Activated B cell treated with CpG ODN at 0.5 μM for 24 hours (primary cell): ENCODE measurements at regions of chr5 and their contacts with region 1.

Region 1: GRCh38 chr5:143403593-143404415 is at the start of gene NR3C1:
- DNase-seq: peak; percentile 87
- ATAC-seq: peak; percentile 72
- H3K4me3 Mint-ChIP-seq: peak within 1 kb of the TSS; percentile 95
- H3K27ac Mint-ChIP-seq: peak within 1 kb of the TSS; percentile 100
- H3K4me1 Mint-ChIP-seq: peaks cover 45% of the 10 kb centered on the region
- H3K27me3 Mint-ChIP-seq: no peaks in the 10 kb centered on the region
- CTCF ChIP-seq: no peak
- total RNA-seq, gene NR3C1: 105 and 110 TPM in 2 replicates

Region 2: GRCh38 chr5:143008809-143009521 is 394.8 kb before region 1 on chr5:
- CTCF ChIA-PET with region 1: interaction called, 29 read pairs
- POLR2A ChIA-PET with region 1: interaction called, 78 read pairs
- intact Hi-C with region 1: no loop called
- DNase-seq: no peak
- ATAC-seq: peak; percentile 69
- H3K4me3 Mint-ChIP-seq: peak overlapping the region; percentile 30
- H3K27ac Mint-ChIP-seq: peak overlapping the region; percentile 80
- H3K4me1 Mint-ChIP-seq: peaks cover 55% of the 10 kb centered on the region
- H3K27me3 Mint-ChIP-seq: no peaks in the 10 kb centered on the region
- CTCF ChIP-seq: no peak

Region 3: GRCh38 chr5:143106174-143106573 is 297.6 kb before region 1 on chr5:
- CTCF ChIA-PET with region 1: no interaction called
- POLR2A ChIA-PET with region 1: no interaction called
- intact Hi-C with region 1: no loop called
- DNase-seq: no peak
- ATAC-seq: no peak
- H3K4me3 Mint-ChIP-seq: no peak overlapping the region
- H3K27ac Mint-ChIP-seq: no peak overlapping the region
- H3K4me1 Mint-ChIP-seq: peaks cover 5% of the 10 kb centered on the region
- H3K27me3 Mint-ChIP-seq: no peaks in the 10 kb centered on the region
- CTCF ChIP-seq: no peak

Region 4: DNA sequence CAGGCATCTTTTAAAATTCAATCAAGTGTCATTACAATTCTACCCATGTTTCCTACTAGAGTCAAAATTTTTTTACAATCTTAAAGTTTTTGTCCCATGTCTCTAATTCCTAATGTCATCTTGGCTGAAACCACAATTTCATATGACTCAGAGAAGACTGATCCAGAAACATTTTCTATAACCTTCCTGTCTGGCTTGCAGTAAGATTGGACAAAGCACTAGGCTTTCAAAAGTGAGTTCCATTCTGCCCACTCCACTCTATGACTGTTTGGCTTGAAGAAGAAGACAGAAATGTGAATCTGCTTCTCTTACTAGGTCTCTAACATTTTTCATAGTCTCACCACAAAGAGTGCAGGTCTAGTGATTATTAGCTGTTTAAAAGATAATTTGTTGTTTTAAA is 89.1 kb before region 1 on chr5:
- CTCF ChIA-PET with region 1: no interaction called
- POLR2A ChIA-PET with region 1: interaction called, 5 read pairs
- intact Hi-C with region 1: loop called (anchors 2 kb)
- DNase-seq: no peak
- ATAC-seq: no peak
- H3K4me3 Mint-ChIP-seq: no peak overlapping the region
- H3K27ac Mint-ChIP-seq: peak overlapping the region; percentile 68
- H3K4me1 Mint-ChIP-seq: peaks cover 68% of the 10 kb centered on the region
- H3K27me3 Mint-ChIP-seq: no peaks in the 10 kb centered on the region
- CTCF ChIP-seq: no peak

Region 5: GRCh38 chr5:143435210-143435657 is 31.4 kb after region 1 on chr5:
- CTCF ChIA-PET with region 1: interaction called, 17 read pairs
- POLR2A ChIA-PET with region 1: interaction called, 218 read pairs
- intact Hi-C with region 1: loop called (anchors 1 kb)
- DNase-seq: peak; percentile 31
- ATAC-seq: peak; percentile 82
- H3K4me3 Mint-ChIP-seq: peak overlapping the region; percentile 89
- H3K27ac Mint-ChIP-seq: peak overlapping the region; percentile 99
- H3K4me1 Mint-ChIP-seq: peaks cover 69% of the 10 kb centered on the region
- H3K27me3 Mint-ChIP-seq: no peaks in the 10 kb centered on the region
- CTCF ChIP-seq: no peak

Region 6: DNA sequence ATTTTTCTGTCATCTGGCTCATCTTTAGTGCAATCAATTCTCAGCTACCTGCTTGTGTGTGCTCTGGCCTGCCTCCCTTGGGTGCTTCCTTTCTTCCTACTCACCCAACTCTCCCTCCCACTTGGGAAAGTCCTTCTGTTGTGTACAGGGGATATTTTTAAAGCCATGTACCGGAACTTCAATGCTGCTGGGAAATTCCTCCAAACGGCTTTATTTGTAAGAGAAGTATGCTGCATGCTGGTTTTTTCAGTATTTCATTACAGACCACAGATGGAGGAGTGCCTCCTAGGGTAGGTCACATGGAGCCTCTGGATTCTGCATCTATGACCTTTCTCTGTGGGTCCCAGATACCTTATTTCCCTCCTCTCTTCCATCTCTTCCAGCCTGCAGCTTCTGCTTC is 402.8 kb after region 1 on chr5:
- CTCF ChIA-PET with region 1: no interaction called
- POLR2A ChIA-PET with region 1: interaction called, 3 read pairs
- intact Hi-C with region 1: loop called (anchors 5 kb)
- DNase-seq: no peak
- ATAC-seq: peak; percentile 25
- H3K4me3 Mint-ChIP-seq: no peak overlapping the region
- H3K27ac Mint-ChIP-seq: peak overlapping the region; percentile 47
- H3K4me1 Mint-ChIP-seq: peaks cover 19% of the 10 kb centered on the region
- H3K27me3 Mint-ChIP-seq: peaks cover 2% of the 10 kb centered on the region
- CTCF ChIP-seq: no peak